ENCODE measurements at regions of chr4 and their contacts with region 1.

Region 1: DNA sequence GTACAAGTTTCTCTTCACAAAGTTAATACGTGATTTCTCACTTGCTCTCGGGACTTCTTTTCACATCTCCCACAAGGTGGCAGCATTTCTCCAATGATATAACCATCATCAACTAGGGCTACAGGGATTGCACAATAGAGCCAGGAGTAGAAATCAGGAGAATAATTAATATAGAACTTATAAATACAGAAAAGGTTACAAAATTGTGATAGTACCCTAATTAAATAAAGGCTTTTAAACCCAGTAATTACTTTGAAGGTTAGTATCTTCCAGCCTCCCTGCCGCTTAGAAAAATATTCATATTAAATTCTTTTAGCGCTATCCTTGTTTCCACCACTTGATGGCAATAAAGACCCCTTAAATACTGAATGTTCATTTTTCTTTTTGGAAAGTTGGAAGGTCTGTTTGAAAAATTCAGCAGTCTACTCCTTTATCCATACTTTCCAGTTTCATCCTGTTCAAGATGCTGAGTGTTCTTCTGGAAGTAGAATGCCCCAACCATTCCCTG is 65.8 kb downstream of the RASGEF1B start:
- DNase-seq: peak; percentile 69
- ATAC-seq: peak; percentile 50; the same call in 1 of the 2 replicates
- H3K4me3 ChIP-seq: no peak overlapping the region
- H3K27ac ChIP-seq: no peak overlapping the region
- H3K4me1 ChIP-seq: no peaks in the 10 kb centered on the region
- H3K27me3 ChIP-seq: peaks cover 15% of the 10 kb centered on the region
- CTCF ChIP-seq: peak; percentile 84

Region 2: DNA sequence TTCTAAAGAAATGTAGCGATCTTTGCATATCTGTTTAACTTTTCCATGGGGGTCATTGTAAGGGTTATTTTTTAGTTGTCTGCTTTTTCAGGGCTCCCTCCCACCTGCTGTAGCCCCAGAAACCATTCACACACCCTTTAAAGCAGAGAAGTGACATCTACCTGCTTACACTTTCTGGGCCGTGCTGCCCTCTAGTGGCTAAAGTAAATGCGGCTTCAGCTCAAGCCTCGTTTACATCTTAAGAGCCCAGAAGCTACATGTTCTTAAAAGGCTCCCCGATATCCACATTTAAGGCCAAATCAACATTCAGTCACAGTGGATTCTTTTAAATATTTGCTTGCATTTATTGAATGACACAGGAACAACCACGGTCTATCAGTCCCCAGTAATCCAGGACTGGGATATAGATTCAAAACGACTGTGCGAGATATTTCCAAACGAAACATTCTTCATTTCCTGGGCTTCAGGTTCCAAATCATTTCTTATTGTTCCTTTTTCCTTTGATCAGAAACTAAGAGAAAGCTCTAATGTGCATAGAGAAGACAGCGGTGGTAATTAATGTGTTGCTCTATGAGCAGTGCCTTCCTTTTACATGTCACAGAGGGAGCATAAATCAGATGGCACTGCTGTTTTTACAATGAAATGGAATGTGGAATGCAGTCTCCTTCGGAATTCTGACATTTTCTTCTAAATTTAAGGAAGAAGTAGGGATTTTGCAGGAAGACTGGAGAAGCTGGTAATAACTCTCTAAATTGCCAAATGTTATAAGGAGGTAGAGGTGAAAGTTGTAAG is 54.1 kb before region 1 on chr4:
- CTCF ChIA-PET with region 1: no interaction called
- POLR2A ChIA-PET with region 1: no interaction called
- intact Hi-C with region 1: no loop called
- DNase-seq: peak; percentile 75
- ATAC-seq: peak; percentile 83
- H3K4me3 ChIP-seq: no peak overlapping the region
- H3K27ac ChIP-seq: no peak overlapping the region
- H3K4me1 ChIP-seq: no peaks in the 10 kb centered on the region
- H3K27me3 ChIP-seq: no peaks in the 10 kb centered on the region
- CTCF ChIP-seq: peak; percentile 90

Region 3: GRCh38 chr4:81454499-81454898 is 48.6 kb after region 1 on chr4:
- CTCF ChIA-PET with region 1: no interaction called
- POLR2A ChIA-PET with region 1: no interaction called
- intact Hi-C with region 1: loop called (anchors 5 kb)
- DNase-seq: peak; percentile 71
- ATAC-seq: peak; percentile 54
- H3K4me3 ChIP-seq: no peak overlapping the region
- H3K27ac ChIP-seq: peak overlapping the region; percentile 14; the same call in 1 of the 2 replicates
- H3K4me1 ChIP-seq: peaks cover 38% of the 10 kb centered on the region
- H3K27me3 ChIP-seq: no peaks in the 10 kb centered on the region
- CTCF ChIP-seq: no peak

Region 4: GRCh38 chr4:81482326-81482725 is 76.4 kb after region 1 on chr4:
- CTCF ChIA-PET with region 1: no interaction called
- POLR2A ChIA-PET with region 1: no interaction called
- intact Hi-C with region 1: no loop called
- DNase-seq: no peak
- ATAC-seq: no peak
- H3K4me3 ChIP-seq: no peak overlapping the region
- H3K27ac ChIP-seq: no peak overlapping the region
- H3K4me1 ChIP-seq: no peaks in the 10 kb centered on the region
- H3K27me3 ChIP-seq: peaks cover 12% of the 10 kb centered on the region; the same call in 1 of the 2 replicates
- CTCF ChIP-seq: no peak

Region 5: GRCh38 chr4:81688085-81688484 is 282.1 kb after region 1 on chr4:
- CTCF ChIA-PET with region 1: no interaction called
- POLR2A ChIA-PET with region 1: no interaction called
- intact Hi-C with region 1: loop called (anchors 1 kb)
- DNase-seq: peak; percentile 40
- ATAC-seq: no peak
- H3K4me3 ChIP-seq: no peak overlapping the region
- H3K27ac ChIP-seq: no peak overlapping the region
- H3K4me1 ChIP-seq: no peaks in the 10 kb centered on the region
- H3K27me3 ChIP-seq: peaks cover 11% of the 10 kb centered on the region; the same call in 1 of the 2 replicates
- CTCF ChIP-seq: peak; percentile 37; the same call in 1 of the 2 replicates

Region 6: GRCh38 chr4:81844717-81845116 is 438.8 kb after region 1 on chr4:
- CTCF ChIA-PET with region 1: no interaction called
- POLR2A ChIA-PET with region 1: no interaction called
- intact Hi-C with region 1: loop called (anchors 1 kb)
- DNase-seq: peak; percentile 86
- ATAC-seq: peak; percentile 78
- H3K4me3 ChIP-seq: no peak overlapping the region
- H3K27ac ChIP-seq: no peak overlapping the region
- H3K4me1 ChIP-seq: no peaks in the 10 kb centered on the region; the same call in 1 of the 2 replicates
- H3K27me3 ChIP-seq: peaks cover 11% of the 10 kb centered on the region; the same call in 1 of the 2 replicates
- CTCF ChIP-seq: peak; percentile 82

Region 7: DNA sequence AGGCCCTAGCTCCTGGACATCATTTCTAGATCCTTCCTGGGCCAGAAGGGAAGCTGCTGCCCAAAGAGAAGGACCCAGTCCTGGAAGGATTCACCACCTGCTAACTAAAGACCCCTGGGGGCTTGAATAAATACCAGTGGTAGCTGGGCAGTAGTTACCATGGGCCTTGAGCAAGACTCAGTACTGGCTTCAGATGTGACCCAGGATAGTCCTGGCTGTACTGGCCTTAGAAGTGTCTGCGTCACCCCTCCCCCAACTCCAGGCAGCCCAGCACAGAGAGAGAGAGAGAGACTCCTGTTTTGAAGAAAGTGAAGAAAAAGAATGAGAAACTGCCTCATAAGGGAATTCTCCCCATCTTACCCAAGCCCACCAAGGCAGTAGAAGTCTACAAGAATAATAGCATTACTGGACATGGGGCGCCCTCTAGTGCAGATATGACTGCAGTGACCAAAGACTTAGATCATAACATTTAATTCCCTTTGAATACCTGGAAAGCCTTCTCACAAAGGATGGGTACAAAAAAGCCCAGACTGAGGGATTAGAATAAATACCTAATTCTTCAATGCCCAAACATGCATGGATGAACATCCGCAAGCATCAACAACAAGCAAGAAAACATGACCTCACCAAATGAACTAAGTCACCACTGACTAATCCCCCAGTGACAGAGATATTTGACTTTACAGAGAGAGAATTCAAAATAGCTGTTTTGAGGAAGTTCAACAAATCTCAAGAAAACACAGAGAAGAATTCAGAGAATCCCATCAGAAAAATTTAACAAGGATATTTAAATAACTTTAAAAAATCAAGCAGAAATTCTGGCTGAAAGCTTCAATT is 796.1 kb after region 1 on chr4:
- CTCF ChIA-PET with region 1: no interaction called
- POLR2A ChIA-PET with region 1: no interaction called
- intact Hi-C with region 1: loop called (anchors 5 kb)
- DNase-seq: peak; percentile 57
- ATAC-seq: 0 out of 2 replicates have a peak, but pooled peaks have one; percentile 37
- H3K4me3 ChIP-seq: no peak overlapping the region
- H3K27ac ChIP-seq: no peak overlapping the region
- H3K4me1 ChIP-seq: no peaks in the 10 kb centered on the region
- H3K27me3 ChIP-seq: peaks cover 22% of the 10 kb centered on the region; the same call in 1 of the 2 replicates
- CTCF ChIP-seq: peak; percentile 89

Region 8: DNA sequence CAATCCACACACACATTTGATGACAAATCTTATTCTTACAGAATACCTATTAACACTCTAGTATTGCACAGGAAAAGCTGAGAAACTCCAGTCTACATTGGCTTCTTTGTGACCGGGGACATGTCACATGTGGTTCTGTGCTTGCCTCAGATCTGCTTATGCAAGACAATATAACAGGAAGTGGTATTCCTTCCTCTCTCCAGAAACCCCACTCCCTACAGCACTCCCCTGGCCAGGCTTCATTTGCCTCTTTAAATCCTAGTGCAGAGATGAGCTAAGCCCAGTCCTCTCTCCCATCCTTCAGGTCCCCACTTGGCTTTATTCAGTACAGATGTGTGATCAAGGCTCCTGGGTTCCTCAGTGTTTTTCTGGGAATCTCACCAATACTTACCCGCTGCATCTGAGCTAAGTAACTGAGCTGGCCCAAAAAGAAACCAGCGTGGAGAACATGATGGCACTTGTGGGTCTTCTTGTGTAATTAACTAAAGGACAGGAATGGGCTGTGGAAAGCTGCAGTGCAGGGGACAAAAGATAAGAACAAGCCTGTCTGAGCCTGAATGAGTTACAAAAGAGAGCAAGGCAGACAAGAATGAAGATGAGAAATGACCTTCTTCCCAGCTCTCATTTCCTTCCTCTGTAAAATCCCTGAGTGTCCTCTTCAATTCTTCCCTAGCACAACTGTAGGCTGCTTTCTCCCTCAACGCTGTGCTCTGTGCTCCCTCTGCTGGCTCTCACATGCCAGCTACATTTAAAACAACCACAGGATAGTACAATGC is 862.3 kb after region 1 on chr4:
- CTCF ChIA-PET with region 1: no interaction called
- POLR2A ChIA-PET with region 1: no interaction called
- intact Hi-C with region 1: loop called (anchors 1 kb)
- DNase-seq: peak; percentile 59
- ATAC-seq: peak; percentile 97
- H3K4me3 ChIP-seq: no peak overlapping the region
- H3K27ac ChIP-seq: no peak overlapping the region
- H3K4me1 ChIP-seq: no peaks in the 10 kb centered on the region
- H3K27me3 ChIP-seq: no peaks in the 10 kb centered on the region
- CTCF ChIP-seq: peak; percentile 81